Heart right ventricle (tissue), 16 donors: ENCODE measurements at regions of chr11 and their contacts with region 1.

Region 1: DNA sequence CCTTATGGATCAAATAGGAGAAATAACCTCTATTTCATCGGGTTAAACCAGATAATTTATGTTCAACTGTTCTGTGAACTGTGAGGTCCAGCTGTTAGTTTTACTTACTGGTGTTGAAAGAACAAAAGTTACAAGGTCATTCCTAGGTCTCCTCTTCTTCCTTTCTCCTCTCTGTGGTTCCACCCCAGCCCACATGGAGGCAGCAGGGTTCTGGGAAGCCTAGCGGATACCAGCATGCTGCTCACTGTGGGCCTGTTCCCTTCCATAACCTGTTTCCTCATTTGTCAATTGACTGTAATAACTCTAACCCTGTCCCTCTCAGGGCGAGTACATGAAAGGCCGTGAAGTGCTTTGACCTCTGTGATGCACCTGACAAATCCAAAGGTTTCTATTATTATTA is 27.8 kb downstream of the RELT start:
- DNase-seq: peak; percentile 72 to 79
- ATAC-seq: peak; percentile 78 to 90 (median 88)
- H3K4me3 ChIP-seq: no peak overlapping the region
- H3K27ac ChIP-seq: peak overlapping the region in 7 of 10 donors; percentile 29 to 71 (median 51)
- H3K4me1 ChIP-seq: peaks cover 3 to 37% (median 19%) of the 10 kb centered on the region in 9 donors
- H3K27me3 ChIP-seq: no peaks in the 10 kb centered on the region
- CTCF ChIP-seq: peak; percentile 58 to 89 (median 82)

Region 2: GRCh38 chr11:73625696-73626318 is 221.8 kb after region 1 on chr11:
- intact Hi-C with region 1: loop called in 6 of 10 experiments (anchors 10 kb)
- DNase-seq: peak; percentile 50 to 79
- ATAC-seq: peak; percentile 72 to 89 (median 85)
- H3K4me3 ChIP-seq: peak overlapping the region in 2 of 10 donors; percentile 10 to 13
- H3K27ac ChIP-seq: no peak overlapping the region
- H3K4me1 ChIP-seq: peaks cover 0 to 36% (median 11%) of the 10 kb centered on the region in 9 donors
- H3K27me3 ChIP-seq: no peaks in the 10 kb centered on the region
- CTCF ChIP-seq: peak; percentile 92 to 97 (median 95)

Region 3: GRCh38 chr11:73652046-73652730 is 248.1 kb after region 1 on chr11:
- intact Hi-C with region 1: loop called in 2 of 10 experiments (anchors 5 to 10 kb)
- DNase-seq: peak in 1 of 2 donors; percentile 36
- ATAC-seq: peak in 2 of 8 donors; percentile 40 to 44
- H3K4me3 ChIP-seq: no peak overlapping the region
- H3K27ac ChIP-seq: no peak overlapping the region
- H3K4me1 ChIP-seq: peaks cover 0 to 18% (median 10%) of the 10 kb centered on the region in 9 donors
- H3K27me3 ChIP-seq: no peaks in the 10 kb centered on the region
- CTCF ChIP-seq: no peak

Region 4: GRCh38 chr11:73661035-73661628 is 257.1 kb after region 1 on chr11:
- intact Hi-C with region 1: loop called (anchors 1 to 10 kb)
- DNase-seq: peak; percentile 90 to 94
- ATAC-seq: peak; percentile 93 to 98 (median 97)
- H3K4me3 ChIP-seq: peak overlapping the region in 9 of 10 donors; percentile 3 to 52 (median 41)
- H3K27ac ChIP-seq: peak overlapping the region in 2 of 10 donors; percentile 22 to 39
- H3K4me1 ChIP-seq: peaks cover 6 to 47% (median 32%) of the 10 kb centered on the region in 9 donors
- H3K27me3 ChIP-seq: no peaks in the 10 kb centered on the region
- CTCF ChIP-seq: peak; percentile 92 to 99 (median 97)